ENCODE measurements at regions of chr9 and their contacts with region 1.

Region 1: GRCh38 chr9:88322906-88323566 is 65.2 kb upstream of the SPIN1 start:
- DNase-seq: no peak

Region 2: GRCh38 chr9:88266416-88266815 is 56.6 kb before region 1 on chr9:
- in situ Hi-C with region 1: loop called (anchors 10 kb)
- DNase-seq: no peak

Region 3: GRCh38 chr9:88477300-88477751 is 154.3 kb after region 1 on chr9:
- in situ Hi-C with region 1: no loop called
- DNase-seq: no peak